Left cardiac atrium (tissue), 4 donors: ENCODE measurements at regions of chr2 and their contacts with region 1.

Region 1: DNA sequence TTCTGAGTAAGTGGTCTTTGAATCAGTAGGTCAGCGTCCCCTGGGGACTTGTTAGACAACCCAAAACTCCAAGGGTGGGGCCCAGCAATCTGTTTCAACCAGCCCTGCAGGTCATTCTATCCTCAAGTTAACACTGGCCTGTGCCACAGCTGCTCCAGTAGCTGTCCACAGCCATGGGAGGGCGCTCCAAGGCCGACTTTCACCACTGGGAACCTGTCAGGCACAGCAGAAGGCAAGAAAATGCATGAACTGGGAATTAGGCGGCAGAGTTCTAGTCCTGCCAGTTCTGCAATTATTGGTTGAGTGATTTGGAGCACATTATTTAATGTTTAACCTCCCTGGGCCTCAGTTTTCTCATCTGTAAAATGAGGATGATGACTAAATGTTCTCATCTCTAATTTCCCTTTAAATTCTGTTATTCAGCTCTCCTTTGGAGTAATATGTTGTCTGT is 17.4 kb upstream of the MRPL33 start:
- DNase-seq: peak; percentile 81
- ATAC-seq: peak; percentile 81 to 82

Region 2: DNA sequence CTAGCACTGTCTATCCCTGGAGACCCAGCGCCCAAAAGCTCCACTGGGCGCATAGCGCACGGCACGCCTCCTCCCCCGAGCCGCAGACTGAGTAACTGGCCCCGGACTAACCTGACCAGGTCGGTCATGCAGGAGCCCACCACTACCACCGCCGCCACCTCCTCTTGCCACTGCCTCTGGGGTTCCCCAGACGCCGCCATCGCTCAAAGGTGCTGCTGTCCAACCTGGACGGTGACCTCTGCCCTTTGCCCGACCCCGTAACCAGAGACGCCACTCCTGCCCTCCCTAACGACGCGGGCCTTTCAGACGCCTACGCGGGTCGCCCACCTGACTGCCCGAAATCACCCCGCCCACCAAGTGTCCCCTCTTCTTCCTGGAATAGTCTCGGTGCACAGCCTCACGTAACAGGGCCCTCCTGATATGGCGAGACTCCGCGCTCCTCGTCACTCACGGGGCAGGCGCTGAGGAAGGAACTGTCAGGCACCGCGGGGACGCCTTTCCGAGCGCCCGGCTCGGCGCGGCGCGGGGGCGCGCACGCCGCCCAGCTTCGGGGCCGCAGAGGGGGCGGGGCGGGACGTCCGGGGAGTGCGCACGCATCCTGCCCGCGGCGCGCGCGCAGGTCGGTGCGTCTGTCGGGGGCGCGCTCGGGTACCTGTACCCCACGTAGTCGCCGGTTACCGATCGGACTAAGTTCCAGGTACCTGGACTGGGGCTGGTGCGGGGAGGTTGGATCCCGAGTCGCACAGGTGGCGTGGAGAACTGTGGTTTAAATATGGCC is 136.2 kb after region 1 on chr2 and contains the starts of genes BABAM2 and RBKS:
- intact Hi-C with region 1: loop called in 1 of 2 experiments (anchors 10 kb)
- DNase-seq: peak; percentile 89
- ATAC-seq: peak; percentile 98
- total RNA-seq, gene BABAM2: 46.8 to 59.7 TPM
- total RNA-seq, gene RBKS: 3.3 TPM

Region 3: GRCh38 chr2:28452534-28453081 is 698.4 kb after region 1 on chr2:
- intact Hi-C with region 1: loop called in 1 of 2 experiments (anchors 5 kb)
- DNase-seq: peak; percentile 78
- ATAC-seq: peak; percentile 68 to 86